Panc1 (cell line): ENCODE measurements at regions of chr7 and their contacts with region 1.

Region 1: DNA sequence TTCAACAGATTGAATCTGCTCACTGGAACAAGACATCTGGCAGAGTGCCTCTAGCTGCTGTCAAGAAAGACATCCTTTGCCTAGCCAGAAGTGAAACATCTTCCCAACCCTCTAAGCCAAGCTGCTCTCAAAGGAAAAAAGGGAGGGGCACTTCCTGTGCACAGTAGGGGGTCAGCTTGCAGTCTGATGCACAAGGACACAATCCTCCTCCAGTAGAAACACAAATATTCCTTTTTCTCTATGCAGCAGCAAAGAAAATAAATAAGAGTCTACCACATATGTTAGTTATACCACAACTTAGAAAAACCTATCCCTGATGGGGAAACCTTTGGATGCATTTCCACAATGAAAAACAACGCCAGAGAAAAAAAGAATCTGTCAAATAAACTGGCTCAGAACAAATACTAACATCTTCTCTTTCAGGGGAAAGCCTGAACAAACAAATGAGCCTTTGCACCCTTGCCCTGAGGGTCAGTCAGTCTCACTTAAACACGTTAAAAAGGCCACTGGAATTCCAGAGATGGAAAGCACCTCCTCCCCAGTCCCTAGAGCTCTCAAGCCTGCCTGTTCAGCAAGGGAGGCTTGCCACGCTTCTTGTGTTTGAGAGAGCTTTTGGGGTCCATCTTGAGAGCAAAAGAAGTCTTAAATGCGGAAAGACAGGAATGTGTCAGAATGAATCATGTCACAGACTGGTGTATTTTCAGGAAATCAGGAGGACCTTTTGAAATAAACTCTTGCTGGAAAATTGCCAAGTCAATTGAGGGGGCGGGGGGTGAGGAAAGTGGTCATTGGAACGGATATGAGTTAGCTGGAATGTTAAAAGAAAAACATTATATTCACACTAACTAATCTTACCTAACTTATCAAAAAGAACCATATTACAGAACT is 7.5 kb downstream of the LAMB1 start:
- DNase-seq: no peak
- ATAC-seq: peak; percentile 86
- H3K4me3 ChIP-seq: no peak overlapping the region
- H3K27ac ChIP-seq: peak overlapping the region; percentile 90
- H3K4me1 ChIP-seq: peaks cover 67% of the 10 kb centered on the region
- H3K27me3 ChIP-seq: no peaks in the 10 kb centered on the region
- CTCF ChIP-seq: no peak

Region 2: DNA sequence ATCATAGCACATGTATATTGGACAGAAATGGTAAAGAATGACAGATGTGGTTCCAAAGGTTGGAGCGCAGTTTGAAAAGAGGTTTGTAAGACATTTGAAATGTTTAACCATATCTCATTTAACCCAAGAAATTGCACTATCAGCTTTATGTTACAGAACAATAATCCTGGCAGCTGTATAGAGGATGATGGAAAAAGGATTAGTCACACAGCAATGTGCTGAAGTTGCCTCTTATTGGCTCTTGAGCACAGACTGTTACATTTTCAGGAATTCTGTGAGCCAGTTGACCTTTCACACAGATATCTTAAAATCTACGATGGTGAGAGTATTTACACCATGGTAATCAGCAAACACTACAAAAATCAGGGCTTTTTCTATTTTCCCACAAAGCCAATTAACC is 435.6 kb before region 1 on chr7:
- CTCF ChIA-PET with region 1: no interaction called
- POLR2A ChIA-PET with region 1: no interaction called
- in situ Hi-C with region 1: no loop called
- intact Hi-C with region 1: no loop called
- DNase-seq: no peak
- ATAC-seq: no peak
- H3K4me3 ChIP-seq: no peak overlapping the region
- H3K27ac ChIP-seq: no peak overlapping the region; the same call in 1 of the 2 replicates
- H3K4me1 ChIP-seq: peaks cover 26% of the 10 kb centered on the region
- H3K27me3 ChIP-seq: no peaks in the 10 kb centered on the region
- CTCF ChIP-seq: no peak

Region 3: DNA sequence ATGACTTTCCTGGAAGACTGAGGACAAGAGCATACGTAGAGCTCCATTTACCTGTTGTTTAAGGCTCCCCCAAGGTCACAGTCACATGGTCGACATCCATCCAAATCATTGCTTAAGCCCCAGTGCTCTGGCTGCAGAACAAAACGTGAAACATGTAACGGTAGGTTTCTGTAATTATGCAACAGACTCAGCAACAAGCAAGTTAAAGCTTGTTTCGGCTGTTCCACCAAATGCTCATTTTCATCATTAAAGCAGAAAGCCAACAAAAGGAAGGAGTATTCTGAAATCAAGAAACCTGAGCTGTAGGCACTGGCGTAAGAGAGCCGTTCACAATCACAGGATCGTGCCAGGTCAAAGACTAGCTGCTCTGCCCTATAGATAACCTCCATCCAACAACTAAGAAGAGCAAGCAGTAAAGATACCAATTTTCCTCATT is 22.5 kb before region 1 on chr7:
- CTCF ChIA-PET with region 1: interaction called, 10 read pairs
- POLR2A ChIA-PET with region 1: no interaction called
- in situ Hi-C with region 1: no loop called
- intact Hi-C with region 1: no loop called
- DNase-seq: no peak
- ATAC-seq: no peak
- H3K4me3 ChIP-seq: no peak overlapping the region
- H3K27ac ChIP-seq: no peak overlapping the region
- H3K4me1 ChIP-seq: no peaks in the 10 kb centered on the region; the same call in 1 of the 2 replicates
- H3K27me3 ChIP-seq: no peaks in the 10 kb centered on the region
- CTCF ChIP-seq: no peak